Breast epithelium (tissue), 4 donors: ENCODE measurements at regions of chr6 and their contacts with region 1.

Region 1: DNA sequence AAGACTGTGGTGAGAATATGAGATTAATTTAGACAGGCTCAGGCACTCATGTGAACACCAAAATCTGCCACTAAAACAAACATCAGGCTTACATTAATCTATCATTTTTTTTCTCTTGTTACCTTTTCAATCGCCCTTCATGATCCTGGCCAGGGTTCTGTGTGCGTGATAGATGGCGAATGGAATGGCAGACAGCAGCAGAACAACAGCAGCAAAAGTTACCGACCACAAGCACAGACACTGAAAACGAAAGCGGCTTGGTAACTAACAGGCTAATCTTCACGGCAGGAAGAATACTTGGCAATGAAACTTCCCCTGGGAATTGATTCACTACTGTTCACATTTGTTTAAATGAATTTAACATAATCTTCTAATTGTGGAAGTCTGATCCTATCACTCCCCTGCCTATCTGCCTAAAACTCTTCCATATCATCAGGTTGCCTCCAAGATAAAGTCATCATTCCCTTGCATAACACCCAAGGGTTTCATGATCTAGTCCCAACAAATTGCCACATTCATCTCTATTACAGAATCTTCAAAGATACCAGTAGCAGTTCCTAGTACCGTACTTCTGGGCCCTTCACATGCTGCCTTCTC is 28.7 kb downstream of the PTPRK start:
- DNase-seq: peak in 1 of 2 donors; percentile 35
- H3K4me3 ChIP-seq: peak overlapping the region; percentile 21 to 63 (median 48)
- H3K27ac ChIP-seq: peak overlapping the region; percentile 88 to 95
- H3K4me1 ChIP-seq: peaks cover 0 to 3% of the 10 kb centered on the region in 2 donors
- H3K27me3 ChIP-seq: no peaks in the 10 kb centered on the region
- CTCF ChIP-seq: no peak
- POLR2A ChIP-seq: no peak

Region 2: GRCh38 chr6:128071212-128071611 is 420.5 kb before region 1 on chr6:
- intact Hi-C with region 1: no loop called
- DNase-seq: no peak
- H3K4me3 ChIP-seq: no peak overlapping the region
- H3K27ac ChIP-seq: no peak overlapping the region
- H3K4me1 ChIP-seq: no peaks in the 10 kb centered on the region
- H3K27me3 ChIP-seq: no peaks in the 10 kb centered on the region
- CTCF ChIP-seq: no peak
- POLR2A ChIP-seq: no peak

Region 3: DNA sequence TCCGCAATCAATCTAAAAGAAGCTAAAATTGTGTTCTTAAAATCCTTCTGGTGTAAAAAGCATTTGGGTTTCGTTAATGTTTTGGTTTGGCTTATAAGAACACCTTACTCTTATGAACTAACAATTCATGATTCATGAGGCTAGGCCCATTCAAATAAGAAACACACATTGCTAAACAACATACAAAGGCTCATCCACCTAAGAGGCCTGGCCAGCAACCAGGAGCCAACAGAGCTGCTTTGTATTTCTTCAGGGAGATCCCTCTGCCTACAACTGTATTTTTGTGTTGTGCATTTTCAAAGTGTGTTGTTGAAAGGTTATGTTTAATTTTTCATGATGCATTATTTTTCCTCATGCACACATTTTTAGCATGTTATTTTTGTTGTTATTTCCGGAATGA is 69.9 kb before region 1 on chr6:
- intact Hi-C with region 1: no loop called
- DNase-seq: peak in 1 of 2 donors; percentile 65
- H3K4me3 ChIP-seq: no peak overlapping the region
- H3K27ac ChIP-seq: peak overlapping the region; percentile 21 to 34
- H3K4me1 ChIP-seq: no peaks in the 10 kb centered on the region
- H3K27me3 ChIP-seq: no peaks in the 10 kb centered on the region
- CTCF ChIP-seq: no peak
- POLR2A ChIP-seq: no peak

Region 4: GRCh38 chr6:129683601-129684322 is 1192.1 kb after region 1 on chr6:
- intact Hi-C with region 1: loop called (anchors 10 kb)
- DNase-seq: peak in 1 of 2 donors; percentile 66
- H3K4me3 ChIP-seq: no peak overlapping the region
- H3K27ac ChIP-seq: peak overlapping the region; percentile 69 to 79
- H3K4me1 ChIP-seq: peaks cover 0 to 9% of the 10 kb centered on the region in 2 donors
- H3K27me3 ChIP-seq: no peaks in the 10 kb centered on the region
- CTCF ChIP-seq: no peak
- POLR2A ChIP-seq: no peak